ENCODE measurements at regions of chr2 and their contacts with region 1.

Region 1: DNA sequence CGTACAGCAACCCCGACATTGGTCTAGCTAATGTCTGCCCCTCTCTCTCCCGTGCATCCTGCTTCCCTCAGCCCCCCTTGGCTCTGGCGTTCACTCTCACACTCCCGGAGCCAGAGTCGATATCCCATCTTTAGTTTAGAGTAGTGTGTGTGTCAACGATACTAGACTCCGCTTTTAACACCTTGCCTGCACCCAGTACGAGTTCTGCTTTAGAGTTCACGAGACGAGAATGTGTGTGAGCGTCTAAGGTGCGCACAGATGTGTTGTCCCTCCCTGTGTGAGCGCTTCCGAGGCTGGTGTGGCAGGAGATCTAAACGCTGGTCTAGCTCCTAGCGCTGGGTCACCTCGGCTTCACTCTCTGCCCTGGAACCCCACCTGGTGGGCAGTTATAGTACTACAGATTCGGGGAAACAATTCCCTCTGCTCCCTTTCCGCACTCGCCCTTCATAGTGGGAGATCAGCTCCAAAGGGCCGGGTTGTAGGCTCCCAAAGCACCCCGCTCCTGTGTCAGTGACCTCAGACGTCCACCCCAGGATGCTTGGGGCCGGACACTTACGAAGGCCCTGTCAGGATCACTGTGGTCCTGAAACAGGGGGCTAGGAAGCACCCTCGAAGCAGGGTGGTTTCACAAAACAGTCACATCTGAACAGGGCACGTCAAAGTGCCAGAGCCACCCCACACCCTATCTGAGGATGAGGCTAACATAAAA is 2.6 kb upstream of the CYP26B1 start:
- DNase-seq: peak; percentile 73 to 80 (median 76)
- ATAC-seq: peak; percentile 75 to 86 (median 80)
- H3K4me3 ChIP-seq: peak overlapping the region in 9 of 12 donors; percentile 48 to 65 (median 56)
- H3K27ac ChIP-seq: no peak overlapping the region
- H3K4me1 ChIP-seq: peaks cover 7 to 49% (median 41%) of the 10 kb centered on the region in 12 donors
- H3K27me3 ChIP-seq: peaks cover 15 to 76% (median 48%) of the 10 kb centered on the region in 9 donors
- CTCF ChIP-seq: peak; percentile 61 to 89 (median 85)
- POLR2A ChIP-seq: no peak

Region 2: GRCh38 chr2:71609958-71610357 is 540.4 kb before region 1 on chr2:
- intact Hi-C with region 1: loop called in 8 of 10 experiments (anchors 5 to 10 kb)
- DNase-seq: peak in 1 of 5 donors; percentile 7
- ATAC-seq: peak in 1 of 4 donors; percentile 15
- H3K4me3 ChIP-seq: no peak overlapping the region
- H3K27ac ChIP-seq: no peak overlapping the region
- H3K4me1 ChIP-seq: peaks cover 8 to 44% (median 19%) of the 10 kb centered on the region in 12 donors
- H3K27me3 ChIP-seq: no peaks in the 10 kb centered on the region
- CTCF ChIP-seq: peak in 10 of 12 donors; percentile 18 to 61 (median 40)
- POLR2A ChIP-seq: no peak

Region 3: DNA sequence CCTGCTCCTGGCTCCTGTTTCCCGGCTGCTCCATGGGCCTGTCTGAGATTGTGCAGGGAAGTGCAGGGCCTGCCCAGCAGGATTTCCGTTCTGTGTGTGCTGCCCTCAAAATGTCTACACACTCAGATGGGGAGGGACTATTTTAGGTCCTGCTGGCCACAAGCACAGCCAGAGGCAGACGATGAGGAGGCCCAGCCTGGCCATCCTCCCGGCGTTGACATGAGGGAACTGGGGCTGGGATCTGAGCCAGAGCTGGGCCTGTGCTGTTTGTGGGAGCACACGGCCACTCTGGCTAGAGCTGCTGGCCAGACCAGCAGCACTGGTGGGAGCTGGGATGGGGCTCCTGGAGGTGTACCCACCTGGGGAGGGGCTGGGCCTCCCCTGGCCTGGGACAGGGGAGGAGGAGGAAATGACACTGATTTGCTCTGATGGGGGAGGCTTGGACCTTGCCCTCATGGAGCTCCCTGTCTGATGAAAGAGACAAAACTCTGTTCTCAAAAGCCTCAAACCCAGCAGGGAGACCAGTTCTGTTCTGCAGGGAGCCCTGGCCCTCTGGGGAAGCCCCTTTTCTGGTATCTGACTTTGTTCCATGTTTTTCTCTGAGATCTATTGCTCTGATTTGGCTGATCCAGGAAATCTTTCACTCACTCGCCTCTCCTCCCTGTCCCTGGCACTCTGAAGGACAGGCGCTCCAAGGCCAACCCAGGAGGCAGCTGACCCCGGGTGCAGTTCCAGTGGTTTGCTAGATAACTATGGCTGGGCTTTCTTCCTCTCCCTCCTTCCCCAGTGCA is 535.1 kb before region 1 on chr2:
- intact Hi-C with region 1: loop called in 7 of 10 experiments (anchors 5 to 10 kb)
- DNase-seq: peak; percentile 89 to 95 (median 93)
- ATAC-seq: peak; percentile 92 to 95 (median 93)
- H3K4me3 ChIP-seq: no peak overlapping the region
- H3K27ac ChIP-seq: peak overlapping the region; percentile 78 to 96 (median 87)
- H3K4me1 ChIP-seq: peaks cover 18 to 49% (median 41%) of the 10 kb centered on the region in 12 donors
- H3K27me3 ChIP-seq: no peaks in the 10 kb centered on the region
- CTCF ChIP-seq: no peak
- POLR2A ChIP-seq: no peak

Region 4: DNA sequence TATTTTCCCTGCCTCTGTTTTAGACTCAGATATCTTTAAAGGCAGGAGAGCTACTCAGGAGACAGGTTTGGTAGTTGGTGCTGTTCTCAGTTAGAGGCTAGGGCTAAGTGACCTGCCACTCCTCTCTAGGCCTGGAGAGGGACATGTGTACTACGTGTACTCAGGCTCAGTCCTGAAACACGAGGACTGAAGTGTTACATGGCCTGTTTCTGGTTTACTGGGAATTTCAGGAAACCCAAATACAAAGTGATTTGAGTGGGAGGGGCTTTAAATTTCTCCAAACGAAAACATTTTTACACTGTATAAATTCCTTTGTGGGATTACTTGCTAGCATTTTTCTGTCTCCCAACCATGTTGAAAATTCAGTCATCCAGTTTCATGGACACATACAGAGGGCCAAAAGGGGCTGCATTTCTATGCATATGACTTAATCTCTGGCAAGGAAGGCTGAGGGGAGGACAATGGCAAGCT is 346.0 kb before region 1 on chr2:
- intact Hi-C with region 1: loop called (anchors 1 to 5 kb)
- DNase-seq: peak in 1 of 5 donors; percentile 9
- ATAC-seq: no peak
- H3K4me3 ChIP-seq: no peak overlapping the region
- H3K27ac ChIP-seq: no peak overlapping the region
- H3K4me1 ChIP-seq: peaks cover 0 to 18% (median 1%) of the 10 kb centered on the region in 12 donors
- H3K27me3 ChIP-seq: no peaks in the 10 kb centered on the region
- CTCF ChIP-seq: peak in 5 of 12 donors; percentile 9 to 43 (median 29)
- POLR2A ChIP-seq: no peak

Region 5: GRCh38 chr2:71923887-71924533 is 226.3 kb before region 1 on chr2:
- intact Hi-C with region 1: loop called (anchors 1 to 2 kb)
- DNase-seq: peak in 3 of 5 donors; percentile 53 to 68 (median 59)
- ATAC-seq: peak; percentile 37 to 83 (median 74)
- H3K4me3 ChIP-seq: no peak overlapping the region
- H3K27ac ChIP-seq: no peak overlapping the region
- H3K4me1 ChIP-seq: no peaks in the 10 kb centered on the region
- H3K27me3 ChIP-seq: no peaks in the 10 kb centered on the region
- CTCF ChIP-seq: peak; percentile 77 to 87 (median 84)
- POLR2A ChIP-seq: no peak

Region 6: DNA sequence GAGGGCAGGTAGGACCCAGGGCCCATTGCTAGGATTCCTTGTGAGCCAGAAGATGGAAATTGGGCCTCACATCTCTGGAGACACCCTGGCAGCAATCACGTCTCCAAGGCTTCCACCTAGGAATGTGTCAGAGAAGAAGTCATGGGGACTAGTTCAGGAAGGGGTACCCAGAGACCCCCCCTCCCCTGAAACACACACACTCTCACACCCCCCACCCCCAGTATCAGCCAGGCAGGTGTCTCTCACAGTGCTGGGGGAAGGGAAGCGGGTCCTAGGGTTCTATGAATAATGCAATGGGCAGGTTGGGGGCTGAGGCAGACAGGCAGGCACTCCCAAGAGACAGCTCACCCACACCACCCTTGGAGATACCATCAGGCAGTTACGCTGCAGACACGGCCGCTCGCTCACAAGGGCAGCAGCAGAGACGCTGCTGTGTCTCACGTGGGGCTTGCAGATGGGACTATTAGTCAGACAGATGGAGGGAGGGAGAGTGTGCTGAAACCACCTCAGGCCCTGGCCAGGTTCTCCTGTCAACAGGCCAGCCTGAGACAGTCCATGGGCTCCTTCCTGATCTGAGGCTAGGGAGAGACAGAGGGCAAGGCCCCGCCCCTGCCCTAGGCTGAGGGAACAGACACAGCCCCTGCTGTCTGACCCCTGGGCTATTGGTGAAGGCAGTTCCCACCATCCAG is 137.3 kb before region 1 on chr2:
- intact Hi-C with region 1: no loop called
- DNase-seq: peak in 1 of 5 donors; percentile 20
- ATAC-seq: no peak
- H3K4me3 ChIP-seq: no peak overlapping the region
- H3K27ac ChIP-seq: no peak overlapping the region
- H3K4me1 ChIP-seq: no peaks in the 10 kb centered on the region
- H3K27me3 ChIP-seq: peaks cover 0 to 16% (median 0%) of the 10 kb centered on the region in 9 donors
- CTCF ChIP-seq: no peak
- POLR2A ChIP-seq: no peak

Region 7: DNA sequence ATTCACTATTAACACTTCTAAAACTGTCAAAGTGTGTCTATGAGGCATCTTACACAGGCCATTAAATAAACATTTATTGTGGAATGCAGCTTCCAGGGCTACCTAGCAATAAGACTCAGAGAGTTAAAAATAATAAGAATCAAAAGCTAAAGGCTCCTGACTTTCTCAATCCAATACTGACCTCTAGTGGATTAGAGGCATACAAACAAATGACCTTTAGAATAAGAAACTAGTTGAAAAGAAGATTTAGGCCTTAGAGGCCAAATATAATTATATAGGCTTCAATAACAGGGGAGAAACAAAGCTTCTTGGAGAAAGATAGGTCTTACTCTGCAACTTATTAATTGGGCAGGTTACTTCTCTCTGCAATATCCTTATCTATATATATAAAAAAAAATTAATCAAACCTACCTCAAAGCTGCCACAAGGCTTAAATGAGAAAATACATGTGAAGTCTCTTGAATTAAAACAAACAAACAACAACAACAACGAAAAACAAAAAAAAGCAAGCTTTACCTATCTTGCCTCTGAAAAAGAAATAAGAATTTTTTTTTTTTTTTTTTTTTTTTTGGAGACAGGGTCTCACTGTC is 429.4 kb after region 1 on chr2:
- intact Hi-C with region 1: loop called in 4 of 10 experiments (anchors 5 to 10 kb)
- DNase-seq: no peak
- ATAC-seq: peak in 2 of 4 donors; percentile 47 to 75
- H3K4me3 ChIP-seq: no peak overlapping the region
- H3K27ac ChIP-seq: no peak overlapping the region
- H3K4me1 ChIP-seq: peaks cover 0 to 31% (median 12%) of the 10 kb centered on the region in 12 donors
- H3K27me3 ChIP-seq: no peaks in the 10 kb centered on the region
- CTCF ChIP-seq: peak; percentile 44 to 83 (median 69)
- POLR2A ChIP-seq: no peak

Region 8: GRCh38 chr2:72745679-72746368 is 595.5 kb after region 1 on chr2:
- intact Hi-C with region 1: loop called in 5 of 10 experiments (anchors 5 to 10 kb)
- DNase-seq: no peak
- ATAC-seq: peak in 2 of 4 donors; percentile 55 to 63
- H3K4me3 ChIP-seq: no peak overlapping the region
- H3K27ac ChIP-seq: peak overlapping the region in 1 of 12 donors; percentile 3
- H3K4me1 ChIP-seq: peaks cover 0 to 42% (median 9%) of the 10 kb centered on the region in 12 donors
- H3K27me3 ChIP-seq: no peaks in the 10 kb centered on the region
- CTCF ChIP-seq: peak; percentile 42 to 79 (median 72)
- POLR2A ChIP-seq: no peak